Natural killer cell (primary cell): ENCODE measurements at regions of chr9 and their contacts with region 1.

Region 1: GRCh38 chr9:108953983-108954574 is 19.9 kb downstream of the ABITRAM start:
- DNase-seq: peak in 1 of 2 donors; percentile 66
- ATAC-seq: no peak
- H3K4me3 ChIP-seq: no peak overlapping the region
- H3K4me3 Mint-ChIP-seq: no peak overlapping the region
- H3K27ac ChIP-seq: no peak overlapping the region
- H3K27ac Mint-ChIP-seq: no peak overlapping the region
- H3K4me1 ChIP-seq: no peaks in the 10 kb centered on the region
- H3K4me1 Mint-ChIP-seq: no peaks in the 10 kb centered on the region
- H3K27me3 ChIP-seq: no peaks in the 10 kb centered on the region
- H3K27me3 Mint-ChIP-seq: no peaks in the 10 kb centered on the region
- CTCF ChIP-seq: peak; percentile 78

Region 2: GRCh38 chr9:107465467-107466451 is 1488.3 kb before region 1 on chr9:
- intact Hi-C with region 1: loop called (anchors 10 kb)
- DNase-seq: peak in 1 of 2 donors; percentile 22
- ATAC-seq: peak; percentile 88 to 97 (median 91)
- H3K4me3 ChIP-seq: peak overlapping the region; percentile 37
- H3K4me3 Mint-ChIP-seq: peak overlapping the region; percentile 71
- H3K27ac ChIP-seq: no peak overlapping the region
- H3K27ac Mint-ChIP-seq: no peak overlapping the region
- H3K4me1 ChIP-seq: peaks cover 12% of the 10 kb centered on the region
- H3K4me1 Mint-ChIP-seq: no peaks in the 10 kb centered on the region
- H3K27me3 ChIP-seq: peaks cover 5% of the 10 kb centered on the region
- H3K27me3 Mint-ChIP-seq: peaks cover 28 to 35% of the 10 kb centered on the region in 2 donors
- CTCF ChIP-seq: peak; percentile 63

Region 3: GRCh38 chr9:108933718-108934322 is 20.3 kb before region 1 on chr9 and contains the start of gene ELP1:
- intact Hi-C with region 1: no loop called
- DNase-seq: peak; percentile 89 to 96
- ATAC-seq: peak; percentile 83 to 90 (median 84)
- H3K4me3 ChIP-seq: peak within 1 kb of the TSS; percentile 89
- H3K4me3 Mint-ChIP-seq: peak within 1 kb of the TSS; percentile 99
- H3K27ac ChIP-seq: peak within 1 kb of the TSS; percentile 86
- H3K27ac Mint-ChIP-seq: peak within 1 kb of the TSS; percentile 95 to 99
- H3K4me1 ChIP-seq: peaks cover 12% of the 10 kb centered on the region
- H3K4me1 Mint-ChIP-seq: peaks cover 22 to 36% of the 10 kb centered on the region in 2 donors
- H3K27me3 ChIP-seq: no peaks in the 10 kb centered on the region
- H3K27me3 Mint-ChIP-seq: no peaks in the 10 kb centered on the region
- CTCF ChIP-seq: no peak
- total RNA-seq, gene ELP1: 21.8 to 33.0 (median 28.2) TPM